ENCODE measurements at regions of chr22 and their contacts with region 1.

Region 1: DNA sequence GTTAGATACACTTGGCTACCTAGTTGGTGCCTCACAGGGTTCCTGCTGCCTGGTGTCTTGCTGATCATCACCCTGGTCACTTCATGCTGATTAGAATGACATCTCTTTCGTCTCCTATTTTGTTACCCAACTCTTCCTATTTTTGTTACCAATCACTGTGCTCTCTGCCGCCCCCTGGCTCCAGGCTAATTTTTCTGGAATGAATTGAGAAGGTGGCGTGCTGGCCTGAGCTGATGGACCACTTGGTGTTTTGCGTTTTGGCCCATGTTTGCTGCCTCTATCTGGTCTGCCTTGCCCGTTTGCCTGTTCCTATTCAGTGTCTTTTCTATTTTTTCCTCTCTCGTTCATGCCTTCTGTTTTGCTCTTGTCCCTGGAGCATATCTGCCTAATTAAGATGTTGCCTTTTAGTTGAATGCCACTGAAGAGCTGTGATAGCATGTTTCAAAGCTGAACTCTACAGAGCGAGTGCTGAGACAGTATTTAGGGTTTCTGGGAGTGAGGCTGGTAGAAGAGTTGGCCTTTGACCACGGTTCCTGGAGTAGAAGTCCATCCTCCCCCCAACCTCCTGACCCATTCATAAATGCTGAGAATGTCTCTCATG is 5.9 kb upstream of the ATF4 start:
- DNase-seq: no peak
- H3K4me3 ChIP-seq: no peak overlapping the region
- CTCF ChIP-seq: peak; percentile 67

Region 2: DNA sequence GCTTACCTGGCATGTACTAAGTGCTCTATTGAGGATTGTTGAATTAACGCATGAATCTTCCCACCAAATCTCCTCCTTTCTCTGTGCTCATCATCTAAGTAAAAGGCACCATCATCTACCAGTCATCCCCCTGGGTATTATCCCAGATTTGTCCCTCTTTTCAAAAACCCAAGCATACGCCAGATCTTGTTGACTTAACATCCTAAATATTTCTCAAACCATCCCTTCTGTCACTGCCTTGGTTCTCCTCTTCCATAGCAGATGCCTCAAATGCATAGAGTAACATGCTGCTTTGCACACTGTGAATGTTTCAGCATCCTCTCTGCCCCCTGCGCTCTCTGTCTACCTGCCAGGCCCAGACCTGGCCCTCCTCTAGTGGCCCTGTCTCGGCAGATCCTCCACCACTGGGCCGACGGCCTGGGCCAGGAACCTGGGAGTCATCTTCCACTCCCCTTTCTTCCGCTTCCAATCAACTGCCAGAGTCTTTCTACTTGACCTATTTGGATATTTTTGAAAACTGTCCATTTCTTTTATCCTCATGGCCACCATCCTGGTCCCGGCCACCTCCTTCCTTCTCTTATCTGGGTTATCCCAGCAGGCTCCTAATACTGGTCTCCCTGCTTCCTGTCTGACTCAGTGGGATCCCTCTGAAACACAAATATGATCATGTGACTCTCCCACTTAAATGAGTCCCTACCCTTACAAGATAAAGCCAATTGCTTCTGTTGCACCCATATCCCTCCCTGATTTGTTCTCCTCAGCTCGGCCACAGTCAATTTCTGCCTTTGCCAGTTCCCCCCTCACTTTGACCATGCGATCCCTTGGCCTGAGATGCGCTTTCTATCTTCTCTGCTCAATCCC is 118.3 kb before region 1 on chr22:
- CTCF ChIA-PET with region 1: interaction called, 15 read pairs
- POLR2A ChIA-PET with region 1: interaction called, 10 read pairs
- DNase-seq: no peak
- H3K4me3 ChIP-seq: no peak overlapping the region
- CTCF ChIP-seq: no peak

Region 3: DNA sequence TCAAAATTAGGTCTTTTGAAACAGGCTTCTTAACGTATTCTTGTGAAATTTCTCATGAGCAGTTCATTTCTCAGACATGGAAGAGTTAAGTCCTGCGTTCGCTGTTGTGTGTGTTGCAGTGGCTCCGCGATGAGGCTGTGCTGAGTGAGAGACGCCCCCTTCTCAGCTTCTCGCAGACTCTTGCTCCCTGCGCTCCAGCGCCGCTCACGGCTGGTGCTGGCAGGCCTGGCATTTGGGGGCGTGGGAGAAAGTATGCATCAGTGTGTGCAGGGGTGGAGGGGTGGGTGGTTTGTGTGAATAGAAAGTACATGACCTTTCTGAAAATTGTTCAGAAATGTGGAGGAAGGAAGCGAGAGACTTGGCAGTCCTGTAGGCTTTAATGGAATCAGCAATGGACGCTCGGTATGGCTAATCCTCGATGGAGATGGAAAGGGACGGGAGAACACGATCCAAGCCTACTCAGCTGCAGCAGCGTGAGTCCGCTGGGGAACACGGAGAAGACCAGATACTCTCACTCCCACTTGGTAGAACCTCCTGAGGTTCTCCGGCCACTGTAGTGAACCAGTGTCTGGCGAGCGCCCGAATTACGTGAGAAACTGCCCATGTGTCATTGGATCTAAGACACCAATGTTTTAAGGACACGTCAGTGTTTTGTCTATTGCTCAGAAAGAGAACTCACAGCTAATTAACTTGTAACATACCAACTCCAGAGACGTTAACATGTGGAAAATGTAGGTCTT is 109.0 kb before region 1 on chr22:
- CTCF ChIA-PET with region 1: interaction called, 17 read pairs
- POLR2A ChIA-PET with region 1: no interaction called
- DNase-seq: no peak
- H3K4me3 ChIP-seq: no peak overlapping the region
- CTCF ChIP-seq: no peak

Region 4: GRCh38 chr22:39502109-39502788 is 12.2 kb before region 1 on chr22 and contains the start of gene MIEF1:
- CTCF ChIA-PET with region 1: interaction called, 172 read pairs
- POLR2A ChIA-PET with region 1: interaction called, 16 read pairs
- DNase-seq: peak; percentile 63
- H3K4me3 ChIP-seq: peak within 1 kb of the TSS; percentile 75
- CTCF ChIP-seq: peak; percentile 18

Measured in AG04449 (cell line).